Adrenal gland (tissue), 19 donors: ENCODE measurements at regions of chr9 and their contacts with region 1.

Region 1: GRCh38 chr9:114285166-114285867 is 37.6 kb upstream of the ORM1 start:
- DNase-seq: peak; percentile 42 to 85 (median 57)
- H3K4me3 ChIP-seq: no peak overlapping the region
- H3K27ac ChIP-seq: peak overlapping the region in 1 of 5 donors; percentile 34
- H3K4me1 ChIP-seq: peaks cover 0 to 21% of the 10 kb centered on the region in 2 donors
- H3K27me3 ChIP-seq: no peaks in the 10 kb centered on the region
- CTCF ChIP-seq: no peak
- POLR2A ChIP-seq: no peak

Region 2: DNA sequence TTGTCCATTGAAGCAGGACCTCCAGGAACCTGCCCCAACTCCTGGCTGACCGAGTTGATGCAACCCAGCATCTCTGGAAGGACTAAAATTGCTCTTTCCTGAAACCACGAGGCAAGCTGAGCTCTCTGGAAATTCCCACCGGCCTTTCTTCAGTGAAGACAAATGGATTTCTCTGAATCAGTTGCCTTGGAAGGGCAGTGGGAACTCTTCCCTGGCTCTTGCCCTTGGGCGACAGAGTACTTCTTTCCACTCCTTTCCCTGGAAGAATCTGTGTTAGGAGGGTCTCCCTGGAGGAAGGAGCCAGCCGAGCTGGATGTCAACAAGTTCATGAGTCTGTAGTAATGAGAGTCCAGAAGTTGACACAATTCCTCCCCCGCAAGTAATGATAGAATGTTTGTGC is 200.6 kb before region 1 on chr9:
- intact Hi-C with region 1: loop called in 1 of 2 experiments (anchors 5 kb)
- DNase-seq: no peak
- H3K4me3 ChIP-seq: no peak overlapping the region
- H3K27ac ChIP-seq: no peak overlapping the region
- H3K4me1 ChIP-seq: no peaks in the 10 kb centered on the region
- H3K27me3 ChIP-seq: no peaks in the 10 kb centered on the region
- CTCF ChIP-seq: no peak
- POLR2A ChIP-seq: no peak

Region 3: GRCh38 chr9:114108016-114108833 is 177.1 kb before region 1 on chr9:
- intact Hi-C with region 1: loop called (anchors 5 kb)
- DNase-seq: peak; percentile 74 to 87 (median 82)
- H3K4me3 ChIP-seq: no peak overlapping the region
- H3K27ac ChIP-seq: no peak overlapping the region
- H3K4me1 ChIP-seq: no peaks in the 10 kb centered on the region
- H3K27me3 ChIP-seq: peaks cover under 1% of the 10 kb centered on the region
- CTCF ChIP-seq: peak; percentile 86 to 96 (median 91)
- POLR2A ChIP-seq: no peak

Region 4: DNA sequence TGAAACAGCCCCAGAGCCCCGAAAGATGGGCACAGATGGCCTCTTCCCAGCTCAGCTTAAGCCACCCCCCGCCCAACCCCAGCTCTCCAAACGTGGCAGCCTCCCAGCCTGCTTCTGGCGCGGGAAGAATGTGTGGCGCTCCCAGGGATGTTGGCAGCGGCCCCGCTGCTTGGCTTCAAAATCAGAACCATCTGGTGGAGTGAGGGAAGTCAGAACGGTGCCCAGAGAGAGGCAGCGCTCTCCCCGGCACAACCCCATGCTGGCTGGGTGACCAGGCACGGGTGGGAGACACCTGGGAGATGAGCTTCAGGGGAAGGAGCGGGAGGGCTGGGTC is 35.1 kb before region 1 on chr9:
- intact Hi-C with region 1: no loop called
- DNase-seq: peak in 1 of 7 donors; percentile 28
- H3K4me3 ChIP-seq: no peak overlapping the region
- H3K27ac ChIP-seq: no peak overlapping the region
- H3K4me1 ChIP-seq: no peaks in the 10 kb centered on the region
- H3K27me3 ChIP-seq: no peaks in the 10 kb centered on the region
- CTCF ChIP-seq: no peak
- POLR2A ChIP-seq: no peak